WTC11 (cell line): ENCODE measurements at regions of chr11 and their contacts with region 1.

Region 1: GRCh38 chr11:118689851-118690552 is 10.6 kb upstream of the TREH start:
- DNase-seq: peak; percentile 96
- ATAC-seq: peak; percentile 86
- H3K4me3 Mint-ChIP-seq: peak overlapping the region; percentile 56
- H3K27ac Mint-ChIP-seq: peak overlapping the region; percentile 41; the same call in 1 of the 2 replicates
- H3K4me1 Mint-ChIP-seq: peaks cover 42% of the 10 kb centered on the region
- H3K27me3 Mint-ChIP-seq: peaks cover 14% of the 10 kb centered on the region; the same call in 1 of the 2 replicates
- CTCF ChIP-seq: peak; percentile 81

Region 2: GRCh38 chr11:118497831-118498230 is 192.2 kb before region 1 on chr11:
- CTCF ChIA-PET with region 1: no interaction called
- POLR2A ChIA-PET with region 1: no interaction called
- DNase-seq: no peak
- ATAC-seq: no peak
- H3K4me3 Mint-ChIP-seq: no peak overlapping the region
- H3K27ac Mint-ChIP-seq: no peak overlapping the region
- H3K4me1 Mint-ChIP-seq: no peaks in the 10 kb centered on the region
- H3K27me3 Mint-ChIP-seq: no peaks in the 10 kb centered on the region
- CTCF ChIP-seq: no peak

Region 3: GRCh38 chr11:118634431-118635236 is 55.4 kb before region 1 on chr11:
- CTCF ChIA-PET with region 1: interaction called, 23 read pairs
- POLR2A ChIA-PET with region 1: no interaction called
- DNase-seq: peak; percentile 93
- ATAC-seq: peak; percentile 90
- H3K4me3 Mint-ChIP-seq: peak overlapping the region; percentile 73
- H3K27ac Mint-ChIP-seq: peak overlapping the region; percentile 93
- H3K4me1 Mint-ChIP-seq: peaks cover 29% of the 10 kb centered on the region
- H3K27me3 Mint-ChIP-seq: no peaks in the 10 kb centered on the region
- CTCF ChIP-seq: no peak

Region 4: DNA sequence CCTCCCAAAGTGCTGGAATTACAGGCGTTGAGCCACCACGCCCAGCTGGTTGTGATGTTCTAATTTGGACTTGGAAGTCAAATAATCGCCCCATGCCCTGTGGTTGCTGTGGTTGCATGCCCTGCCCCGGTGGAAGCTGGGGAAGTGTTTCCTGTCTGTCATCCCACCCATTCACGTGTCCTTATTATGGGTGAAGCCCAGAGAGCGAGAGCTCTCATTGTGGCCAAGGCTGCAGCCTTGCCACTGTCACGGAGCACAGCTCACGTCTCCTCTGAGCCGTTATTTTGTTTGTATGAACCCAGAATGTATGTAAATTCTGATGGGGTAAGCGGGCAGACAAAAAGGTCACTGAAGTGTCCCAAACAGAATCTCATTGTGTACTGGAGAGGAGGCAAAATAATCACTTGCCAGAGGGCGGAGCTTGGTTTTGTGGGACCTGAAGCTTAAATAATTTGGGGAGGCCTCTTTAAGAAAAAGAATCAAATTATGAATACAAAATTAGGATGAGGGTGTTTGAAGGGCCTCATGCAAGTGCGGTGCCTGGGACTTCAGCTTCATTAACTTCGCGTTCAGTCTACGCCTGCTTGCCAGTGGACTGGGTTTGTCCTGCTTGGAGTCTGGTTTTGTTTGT is 15.2 kb after region 1 on chr11:
- CTCF ChIA-PET with region 1: interaction called, 20 read pairs
- POLR2A ChIA-PET with region 1: no interaction called
- DNase-seq: no peak
- ATAC-seq: peak; percentile 21; the same call in 1 of the 2 replicates
- H3K4me3 Mint-ChIP-seq: no peak overlapping the region
- H3K27ac Mint-ChIP-seq: peak overlapping the region; percentile 74
- H3K4me1 Mint-ChIP-seq: peaks cover 16% of the 10 kb centered on the region
- H3K27me3 Mint-ChIP-seq: peaks cover 3% of the 10 kb centered on the region
- CTCF ChIP-seq: no peak

Region 5: GRCh38 chr11:118744046-118744445 is 54.0 kb after region 1 on chr11:
- CTCF ChIA-PET with region 1: interaction called, 43 read pairs
- POLR2A ChIA-PET with region 1: interaction called, 5 read pairs
- DNase-seq: no peak
- ATAC-seq: no peak
- H3K4me3 Mint-ChIP-seq: no peak overlapping the region
- H3K27ac Mint-ChIP-seq: peak overlapping the region; percentile 46
- H3K4me1 Mint-ChIP-seq: peaks cover 55% of the 10 kb centered on the region
- H3K27me3 Mint-ChIP-seq: no peaks in the 10 kb centered on the region
- CTCF ChIP-seq: no peak

Region 6: DNA sequence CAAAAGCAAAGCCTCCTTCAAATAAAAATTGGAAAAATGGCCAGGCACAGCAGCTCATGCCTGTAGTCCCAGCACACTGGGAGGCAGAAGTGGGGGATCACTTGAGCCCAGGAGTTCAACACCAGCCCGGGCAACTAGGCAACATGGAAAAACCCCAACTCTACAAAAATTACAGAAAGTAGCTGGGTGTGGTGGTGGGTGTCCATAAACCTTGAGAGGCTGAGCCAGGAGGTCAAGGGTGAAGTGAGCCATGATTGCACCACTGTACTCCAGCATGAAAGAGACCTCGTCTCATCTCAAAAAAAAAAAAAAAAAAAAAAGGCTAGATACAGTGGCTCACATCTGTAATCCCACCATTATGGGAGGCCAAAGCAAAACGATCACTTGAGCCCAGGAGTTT is 78.7 kb after region 1 on chr11:
- CTCF ChIA-PET with region 1: interaction called, 12 read pairs
- POLR2A ChIA-PET with region 1: no interaction called
- DNase-seq: no peak
- ATAC-seq: no peak
- H3K4me3 Mint-ChIP-seq: no peak overlapping the region
- H3K27ac Mint-ChIP-seq: peak overlapping the region; percentile 89
- H3K4me1 Mint-ChIP-seq: 0 out of 2 replicates have a peak, but pooled peaks cover 2% of the 10 kb centered on the region
- H3K27me3 Mint-ChIP-seq: no peaks in the 10 kb centered on the region
- CTCF ChIP-seq: no peak

Region 7: DNA sequence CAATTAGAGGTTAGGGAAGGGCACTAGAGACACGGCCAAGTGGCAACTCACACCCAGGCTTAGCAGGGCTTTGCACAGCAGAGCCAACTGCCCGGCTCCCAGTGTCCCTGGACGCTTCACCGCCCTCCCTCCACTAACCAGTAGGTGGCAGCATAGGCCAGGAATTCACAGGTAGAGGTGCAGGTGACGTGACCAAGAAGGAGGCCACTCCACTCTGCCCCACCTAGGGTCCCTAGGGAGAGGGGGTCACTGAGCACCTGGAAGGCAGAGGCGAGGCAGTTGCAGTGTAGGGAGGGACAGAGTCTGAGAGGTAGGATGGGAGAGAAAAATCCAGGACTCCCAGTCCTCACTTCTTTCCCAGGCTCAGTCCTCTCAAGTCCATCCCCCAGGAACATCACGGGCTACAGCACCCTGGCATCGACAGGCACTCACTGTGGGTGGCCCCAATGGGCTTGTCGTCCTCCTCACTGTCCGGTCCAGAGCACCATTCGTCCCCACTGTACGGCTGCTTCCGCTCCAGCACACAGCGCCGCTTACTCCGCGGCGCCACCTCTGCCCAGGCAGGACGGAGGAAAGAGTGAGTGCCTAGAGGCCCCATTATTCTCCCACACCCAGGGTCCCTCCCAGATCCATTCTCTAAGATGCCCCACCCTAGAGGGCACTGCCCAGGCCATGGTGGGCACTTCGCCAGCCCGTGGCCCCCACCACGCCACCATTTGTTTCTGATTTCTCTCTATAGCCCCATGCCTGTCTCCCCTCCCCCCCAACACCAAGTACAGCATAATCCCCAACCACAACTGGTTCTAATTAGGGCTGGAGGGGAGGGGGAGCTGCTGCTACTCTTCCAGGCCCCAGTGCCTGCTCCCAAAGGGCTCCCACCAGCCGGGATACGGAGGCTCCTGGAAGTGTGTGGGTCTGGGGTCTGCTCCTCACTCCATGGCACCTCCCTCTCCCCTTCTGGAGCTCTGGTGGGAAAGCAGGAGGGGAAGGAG is 217.3 kb after region 1 on chr11:
- CTCF ChIA-PET with region 1: interaction called, 26 read pairs
- POLR2A ChIA-PET with region 1: no interaction called
- DNase-seq: peak; percentile 95
- ATAC-seq: peak; percentile 31
- H3K4me3 Mint-ChIP-seq: peak overlapping the region; percentile 72
- H3K27ac Mint-ChIP-seq: peak overlapping the region; percentile 74
- H3K4me1 Mint-ChIP-seq: peaks cover 37% of the 10 kb centered on the region
- H3K27me3 Mint-ChIP-seq: no peaks in the 10 kb centered on the region
- CTCF ChIP-seq: peak; percentile 92